ENCODE measurements at regions of chr1 and their contacts with region 1.

Region 1: DNA sequence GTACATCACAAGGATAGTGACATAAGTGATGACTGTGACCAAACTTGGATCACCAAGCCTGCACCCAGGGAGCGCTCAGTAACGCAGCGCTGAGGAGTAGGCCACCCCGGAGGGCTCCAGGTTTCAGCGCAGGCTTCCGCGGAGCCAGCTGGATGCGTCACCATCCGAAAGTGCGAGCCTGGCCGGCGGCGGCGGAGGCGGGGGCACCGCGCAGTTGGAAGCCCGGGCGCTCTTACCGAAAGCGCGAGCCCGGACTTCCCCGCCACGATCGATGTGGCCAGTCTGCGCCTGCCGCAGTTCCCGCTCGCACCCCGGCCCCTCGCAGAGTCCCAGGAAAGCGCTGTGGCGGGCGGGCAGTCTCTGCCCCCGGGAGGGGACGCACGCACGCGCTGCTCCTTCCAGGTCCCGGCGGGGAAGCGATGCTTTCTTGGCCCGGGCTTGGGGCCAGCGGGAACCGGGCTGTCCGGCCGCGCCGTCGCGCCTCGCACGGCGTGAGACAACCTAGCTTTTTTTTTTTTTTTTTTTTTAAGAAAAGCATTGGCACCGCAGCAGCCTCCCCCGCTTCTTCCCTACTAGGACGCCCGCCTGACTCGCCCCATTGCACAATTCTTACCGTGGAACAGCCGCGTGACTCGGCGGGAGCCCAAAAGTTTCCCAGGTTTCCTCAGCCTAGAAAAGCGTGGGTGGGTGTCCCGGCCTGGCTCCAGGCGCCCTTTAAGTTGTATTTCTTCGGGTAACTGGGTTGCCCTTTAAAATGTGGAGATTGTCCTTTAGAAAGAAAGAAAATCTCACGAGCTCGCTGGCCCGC is 36.4 kb upstream of the JAK1 start:
- DNase-seq: peak; percentile 96 to 97
- H3K4me3 ChIP-seq: peak overlapping the region; percentile 48 to 68
- H3K27ac ChIP-seq: peak overlapping the region; percentile 91 to 100
- H3K4me1 ChIP-seq: peaks cover 0 to 5% of the 10 kb centered on the region in 2 donors
- H3K27me3 ChIP-seq: no peaks in the 10 kb centered on the region
- CTCF ChIP-seq: no peak
- POLR2A ChIP-seq: peak; percentile 37 to 46

Region 2: DNA sequence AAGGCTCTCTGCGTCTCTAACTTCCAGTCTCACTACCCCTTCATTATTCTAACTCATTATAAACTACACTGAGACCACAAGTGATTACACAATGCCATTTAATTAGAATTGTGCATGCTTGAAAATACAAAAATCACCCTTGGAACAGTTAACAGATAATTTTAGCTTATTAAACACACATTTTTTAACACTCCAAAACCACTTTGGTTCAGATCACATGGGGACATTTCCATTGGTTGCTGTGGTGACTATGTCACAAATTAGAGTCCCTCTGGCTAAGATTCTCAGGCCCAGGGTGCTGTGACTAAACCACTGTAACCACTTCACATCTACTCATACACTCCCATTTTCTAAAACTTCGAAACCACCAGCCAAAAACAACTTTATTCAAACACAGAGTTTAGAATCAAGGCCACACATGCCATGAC is 79.4 kb before region 1 on chr1:
- intact Hi-C with region 1: no loop called
- DNase-seq: no peak
- H3K4me3 ChIP-seq: no peak overlapping the region
- H3K27ac ChIP-seq: no peak overlapping the region
- H3K4me1 ChIP-seq: no peaks in the 10 kb centered on the region
- H3K27me3 ChIP-seq: no peaks in the 10 kb centered on the region
- CTCF ChIP-seq: no peak
- POLR2A ChIP-seq: no peak

Region 3: DNA sequence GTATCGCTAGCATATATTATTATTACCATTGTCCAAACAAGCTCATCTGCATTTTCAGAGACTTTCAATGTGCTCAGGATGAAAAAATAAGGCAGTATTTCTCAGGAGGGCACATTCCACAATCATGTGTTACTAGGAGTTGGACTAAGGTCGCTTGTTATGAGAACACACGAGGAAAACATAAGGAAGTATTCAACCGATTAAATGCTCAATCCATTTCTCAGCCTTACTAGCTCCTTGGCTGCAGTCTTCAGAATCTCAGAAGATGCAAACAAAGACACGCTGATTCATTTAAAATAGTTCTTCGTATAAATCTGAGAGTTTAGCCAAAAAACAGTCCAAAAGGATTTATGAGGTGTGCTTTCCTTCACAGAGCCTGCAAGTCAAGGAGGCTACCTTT is 45.6 kb after region 1 on chr1:
- intact Hi-C with region 1: no loop called
- DNase-seq: no peak
- H3K4me3 ChIP-seq: no peak overlapping the region
- H3K27ac ChIP-seq: no peak overlapping the region
- H3K4me1 ChIP-seq: no peaks in the 10 kb centered on the region
- H3K27me3 ChIP-seq: no peaks in the 10 kb centered on the region
- CTCF ChIP-seq: no peak
- POLR2A ChIP-seq: no peak

Region 4: GRCh38 chr1:65067491-65068201 is 64.9 kb after region 1 on chr1:
- intact Hi-C with region 1: loop called (anchors 10 kb)
- DNase-seq: peak; percentile 65 to 82
- H3K4me3 ChIP-seq: peak overlapping the region; percentile 92 to 95
- H3K27ac ChIP-seq: peak overlapping the region; percentile 100
- H3K4me1 ChIP-seq: no peaks in the 10 kb centered on the region
- H3K27me3 ChIP-seq: no peaks in the 10 kb centered on the region
- CTCF ChIP-seq: no peak
- POLR2A ChIP-seq: peak; percentile 65 to 81